ENCODE measurements at regions of chr16 and their contacts with region 1.

Region 1: GRCh38 chr16:2213817-2214720 is 571 bp downstream of the PGP start:
- DNase-seq: no peak
- ATAC-seq: peak; percentile 3; the same call in 1 of the 2 replicates
- H3K4me3 ChIP-seq: peak overlapping the region; percentile 65 to 83
- H3K27ac ChIP-seq: peak overlapping the region; percentile 86
- H3K4me1 ChIP-seq: peaks cover 30% of the 10 kb centered on the region
- H3K27me3 ChIP-seq: no peaks in the 10 kb centered on the region
- CTCF ChIP-seq: no peak

Region 2: DNA sequence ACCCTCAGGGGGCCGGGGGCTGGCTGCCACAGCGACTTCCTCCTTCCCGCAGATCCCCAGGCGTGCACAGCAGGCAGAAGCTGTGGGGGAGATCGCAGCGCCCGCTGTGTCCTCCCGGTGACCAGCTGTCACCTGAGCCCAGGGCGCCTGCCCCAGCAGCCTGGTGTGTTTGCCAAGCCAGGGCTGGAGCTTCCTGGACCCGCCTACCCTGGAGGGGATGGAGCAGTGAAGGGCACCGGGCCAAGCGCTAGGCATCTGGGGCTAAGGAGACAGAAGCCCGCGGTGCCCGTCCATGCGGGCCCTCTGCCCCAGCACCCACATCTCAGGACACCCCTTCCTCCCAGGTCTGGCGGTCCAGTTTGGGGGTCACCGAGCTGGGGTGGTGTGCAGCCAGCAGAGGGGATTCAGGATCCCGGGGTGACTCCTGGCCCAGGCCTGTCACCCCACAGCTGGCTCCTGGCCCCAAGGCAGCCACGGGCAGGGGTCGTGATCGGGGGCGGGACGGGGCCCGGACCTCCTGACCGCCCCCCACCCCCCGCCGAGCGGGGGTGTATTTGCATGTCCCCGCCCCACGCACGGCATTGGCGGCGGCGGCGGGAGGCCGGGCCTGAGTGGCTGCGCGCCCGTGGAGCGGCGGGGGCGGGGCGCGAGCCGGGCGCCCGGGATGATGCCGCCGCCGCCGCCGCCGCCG is 65.9 kb before region 1 on chr16 and contains the start of gene RAB26:
- CTCF ChIA-PET with region 1: no interaction called
- POLR2A ChIA-PET with region 1: interaction called, 25 read pairs
- in situ Hi-C with region 1: no loop called
- intact Hi-C with region 1: no loop called
- DNase-seq: no peak
- ATAC-seq: peak; percentile 59
- H3K4me3 ChIP-seq: peak within 1 kb of the TSS; percentile 59 to 67
- H3K27ac ChIP-seq: peak within 1 kb of the TSS; percentile 100
- H3K4me1 ChIP-seq: peaks cover 50% of the 10 kb centered on the region
- H3K27me3 ChIP-seq: no peaks in the 10 kb centered on the region
- CTCF ChIP-seq: no peak
- total RNA-seq, gene RAB26: 92.2 TPM

Region 3: DNA sequence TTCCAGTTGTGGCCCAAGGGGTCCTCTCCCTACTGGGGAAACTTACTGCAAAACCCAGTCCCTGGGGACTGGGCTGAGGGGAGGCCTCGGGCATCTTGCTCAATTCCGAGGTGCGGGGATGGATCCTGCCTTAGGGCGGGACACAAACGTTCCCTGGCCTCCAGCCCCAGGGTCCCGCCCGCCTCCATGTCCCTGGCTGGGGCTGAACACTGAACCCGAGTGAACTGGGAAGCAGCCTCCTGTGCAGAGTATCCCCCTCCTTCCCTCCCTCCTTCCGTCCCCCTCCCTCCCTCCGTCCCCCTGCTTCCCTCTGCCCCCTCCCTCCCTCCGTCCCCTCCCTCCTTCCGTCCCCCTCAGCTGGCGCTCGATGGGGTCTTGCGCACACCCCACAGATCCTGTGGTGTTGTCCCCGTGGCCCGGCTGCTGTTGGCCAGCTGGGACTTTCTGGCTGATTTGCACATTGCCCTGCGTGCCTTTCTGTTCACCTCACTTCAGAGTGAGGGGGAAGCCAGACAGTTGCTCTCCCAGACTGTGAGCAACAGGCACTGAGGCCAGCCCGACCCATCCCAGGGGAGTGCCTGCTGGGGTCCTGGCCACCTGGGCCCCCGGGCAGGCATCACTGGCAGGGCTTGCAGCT is 53.0 kb before region 1 on chr16:
- CTCF ChIA-PET with region 1: no interaction called
- POLR2A ChIA-PET with region 1: no interaction called
- in situ Hi-C with region 1: no loop called
- intact Hi-C with region 1: no loop called
- DNase-seq: no peak
- ATAC-seq: no peak
- H3K4me3 ChIP-seq: no peak overlapping the region
- H3K27ac ChIP-seq: no peak overlapping the region; the same call in 1 of the 2 replicates
- H3K4me1 ChIP-seq: peaks cover 34% of the 10 kb centered on the region
- H3K27me3 ChIP-seq: no peaks in the 10 kb centered on the region
- CTCF ChIP-seq: no peak

Region 4: DNA sequence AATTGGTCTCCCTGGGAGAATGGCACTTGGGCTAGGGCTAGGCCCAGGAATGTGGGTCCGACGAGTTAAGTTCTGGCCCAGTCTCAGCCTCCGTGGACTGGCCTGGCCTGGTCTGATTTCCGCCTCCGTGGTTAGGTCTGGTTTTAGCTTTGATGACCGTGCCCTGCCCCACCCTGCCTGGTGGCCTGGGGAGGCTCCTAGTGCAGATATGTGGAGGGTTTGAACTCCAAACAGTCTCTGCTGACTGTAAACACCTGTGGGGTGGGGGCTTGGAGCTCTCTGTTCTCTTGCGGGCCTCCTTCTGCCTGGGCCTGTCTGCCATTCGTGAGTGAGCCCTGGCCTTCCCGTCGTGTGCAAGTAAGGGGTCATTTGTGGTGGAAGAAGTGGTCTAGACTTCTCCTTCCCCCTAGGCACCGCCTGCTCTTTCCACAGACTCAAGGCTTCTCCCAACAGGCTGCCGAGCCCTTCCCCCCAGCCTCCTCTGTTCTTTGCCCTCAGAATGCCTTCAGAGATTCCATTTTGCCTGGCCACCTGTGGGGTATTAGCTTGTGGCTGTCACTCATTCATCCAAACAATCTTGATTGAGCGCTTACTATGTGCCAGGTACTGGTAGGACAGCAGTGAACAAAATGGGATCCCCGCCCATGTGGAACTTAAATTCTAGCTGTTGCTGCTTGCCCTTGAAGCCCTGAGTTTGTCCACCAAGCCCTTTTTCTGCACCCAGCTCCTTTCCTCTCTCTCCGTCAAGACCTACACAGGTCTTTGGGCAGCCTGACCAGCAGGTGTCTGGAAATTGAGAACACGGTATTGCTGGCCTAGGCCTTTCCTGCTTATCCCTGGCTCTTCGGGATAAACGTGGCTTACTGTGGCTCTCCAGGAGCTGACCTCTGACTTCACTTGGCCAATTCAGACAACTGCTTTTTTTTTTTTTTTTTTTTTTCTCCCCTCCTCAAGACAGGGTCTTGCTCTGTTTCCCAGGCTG is 301.4 kb after region 1 on chr16:
- CTCF ChIA-PET with region 1: no interaction called
- POLR2A ChIA-PET with region 1: interaction called, 14 read pairs
- in situ Hi-C with region 1: no loop called
- intact Hi-C with region 1: no loop called
- DNase-seq: no peak
- ATAC-seq: no peak
- H3K4me3 ChIP-seq: peak overlapping the region; percentile 85 to 95
- H3K27ac ChIP-seq: peak overlapping the region; percentile 90
- H3K4me1 ChIP-seq: peaks cover 45% of the 10 kb centered on the region
- H3K27me3 ChIP-seq: no peaks in the 10 kb centered on the region
- CTCF ChIP-seq: no peak